AG04449 (cell line): ENCODE measurements at regions of chr7 and their contacts with region 1.

Region 1: DNA sequence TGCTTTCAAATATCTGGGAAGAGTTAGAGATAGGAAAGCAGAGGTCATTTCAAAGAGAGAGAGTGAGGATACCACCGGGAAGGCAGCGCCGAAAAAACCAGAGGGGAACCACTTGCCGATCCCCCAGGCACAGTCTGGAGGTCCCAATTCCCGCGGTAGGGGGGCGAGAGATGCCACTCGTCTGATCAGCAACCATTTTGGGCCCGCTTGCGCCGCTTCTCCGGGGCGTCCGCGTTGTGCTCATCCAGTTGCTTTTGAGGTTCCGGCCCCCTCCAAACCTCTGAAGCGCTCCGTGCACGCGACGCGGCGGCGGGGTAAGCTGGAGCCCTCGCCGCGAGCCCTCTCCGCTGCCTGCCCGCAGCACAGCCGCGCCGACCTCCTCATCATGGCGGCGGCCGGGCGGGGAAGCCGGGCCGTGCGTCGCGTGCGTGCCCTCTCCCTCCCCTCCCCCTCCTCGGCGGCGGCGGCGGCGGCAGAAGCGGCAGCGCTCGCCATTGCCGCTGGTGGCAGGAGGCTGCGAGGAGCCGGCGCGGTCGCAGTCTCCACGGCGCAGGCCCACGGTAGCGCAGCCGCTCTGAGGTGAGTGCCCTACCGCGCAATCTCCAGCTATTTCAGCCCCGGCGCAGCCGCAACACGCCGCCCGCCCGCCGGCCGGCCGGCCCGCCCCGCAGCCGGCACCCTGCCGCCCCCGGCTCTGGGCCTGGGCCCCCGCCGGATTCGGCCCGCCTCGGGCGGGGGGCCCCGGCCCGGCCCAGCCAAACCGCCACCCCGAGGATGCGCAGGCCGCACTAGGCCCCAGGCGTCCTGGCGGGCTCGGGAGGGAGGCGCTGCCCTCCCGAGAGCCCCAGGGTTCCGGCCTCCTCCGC is at the start of gene NRF1:
- DNase-seq: peak; percentile 19
- H3K4me3 ChIP-seq: peak within 1 kb of the TSS; percentile 81
- CTCF ChIP-seq: peak; percentile 43

Region 2: DNA sequence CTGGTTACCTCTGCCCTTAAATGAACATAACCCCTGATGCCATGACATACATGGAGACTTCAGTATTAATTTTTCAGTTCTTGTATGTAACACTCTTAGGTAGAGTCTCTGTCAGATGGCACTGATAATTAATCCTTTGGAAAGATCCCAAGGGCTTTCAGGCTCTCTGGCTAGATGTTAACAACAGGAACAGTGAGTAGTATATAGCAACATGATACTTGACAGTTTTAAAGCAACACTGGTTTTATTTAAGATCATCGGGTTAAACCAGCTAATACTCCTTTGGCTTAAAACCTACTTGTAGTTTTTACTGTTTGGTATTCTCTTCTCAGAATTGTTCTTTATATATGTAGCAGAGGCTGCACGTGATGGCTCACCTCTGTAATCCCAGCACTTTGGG is 359.4 kb before region 1 on chr7:
- CTCF ChIA-PET with region 1: no interaction called
- POLR2A ChIA-PET with region 1: no interaction called
- DNase-seq: no peak
- H3K4me3 ChIP-seq: no peak overlapping the region
- CTCF ChIP-seq: no peak

Region 3: GRCh38 chr7:129525225-129525862 is 86.1 kb before region 1 on chr7:
- CTCF ChIA-PET with region 1: no interaction called
- POLR2A ChIA-PET with region 1: no interaction called
- DNase-seq: no peak
- H3K4me3 ChIP-seq: no peak overlapping the region
- CTCF ChIP-seq: no peak

Region 4: GRCh38 chr7:129635300-129636029 is 24.0 kb after region 1 on chr7:
- CTCF ChIA-PET with region 1: interaction called, 61 read pairs
- POLR2A ChIA-PET with region 1: interaction called, 3 read pairs
- DNase-seq: no peak
- H3K4me3 ChIP-seq: no peak overlapping the region
- CTCF ChIP-seq: peak; percentile 88